Heart left ventricle (tissue), 16 donors: ENCODE measurements at regions of chr11 and their contacts with region 1.

Region 1: DNA sequence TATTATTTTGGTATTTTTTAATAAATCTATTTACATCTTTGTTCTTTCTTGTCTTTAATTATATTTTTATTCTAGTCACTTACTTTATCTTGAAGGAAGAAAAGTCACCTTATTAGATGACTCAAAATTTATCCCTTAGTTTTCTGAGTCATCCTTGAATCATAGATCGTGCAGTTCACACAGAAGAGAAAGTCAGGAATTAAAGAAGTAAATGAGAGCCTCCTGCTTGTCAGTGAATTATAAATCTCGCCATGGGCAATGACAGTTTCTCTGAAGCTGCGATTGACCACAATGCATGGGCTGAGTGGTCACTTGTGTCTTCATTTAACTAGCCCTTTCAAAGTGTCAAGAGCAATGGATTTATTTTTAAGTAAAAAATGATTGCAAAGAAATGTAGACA is 91.2 kb downstream of the LUZP2 start:
- DNase-seq: no peak
- ATAC-seq: no peak
- H3K4me3 ChIP-seq: no peak overlapping the region
- H3K27ac ChIP-seq: no peak overlapping the region
- H3K4me1 ChIP-seq: no peaks in the 10 kb centered on the region
- H3K27me3 ChIP-seq: no peaks in the 10 kb centered on the region
- CTCF ChIP-seq: no peak
- POLR2A ChIP-seq: no peak

Region 2: DNA sequence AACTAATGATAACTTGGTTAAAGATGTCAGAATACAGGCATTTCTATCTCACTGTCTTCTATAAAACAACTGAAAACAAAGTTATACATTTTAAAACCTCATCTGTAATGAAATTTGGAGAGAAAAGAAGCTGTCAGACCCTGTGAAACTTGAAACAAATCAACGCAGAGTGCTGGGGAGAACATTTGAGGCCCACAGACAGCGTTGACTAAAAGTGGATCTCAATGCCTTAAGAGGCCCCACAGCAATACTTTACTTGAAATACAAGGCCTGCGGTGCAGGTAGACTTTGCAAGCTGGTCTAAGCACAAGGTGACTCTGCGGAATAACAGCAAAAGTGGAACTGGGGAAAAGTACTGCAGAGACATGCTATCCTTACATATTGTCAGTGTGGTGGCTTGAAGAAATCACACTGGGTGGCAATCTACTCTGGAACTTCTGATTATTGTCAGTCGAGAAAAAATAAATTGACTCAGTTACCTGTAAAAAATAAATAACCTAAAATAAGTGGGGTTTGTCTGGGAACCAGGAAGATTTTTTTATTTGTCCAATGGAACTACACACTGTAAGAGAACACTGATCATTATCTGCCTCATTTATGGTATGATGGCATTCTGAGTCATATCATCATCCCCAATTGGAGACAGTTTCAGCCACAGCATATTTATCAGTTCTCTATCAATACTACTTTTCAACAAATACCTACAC is 47.7 kb after region 1 on chr11:
- intact Hi-C with region 1: loop called in 1 of 10 experiments (anchors 5 kb)
- DNase-seq: no peak
- ATAC-seq: no peak
- H3K4me3 ChIP-seq: no peak overlapping the region
- H3K27ac ChIP-seq: no peak overlapping the region
- H3K4me1 ChIP-seq: no peaks in the 10 kb centered on the region
- H3K27me3 ChIP-seq: no peaks in the 10 kb centered on the region
- CTCF ChIP-seq: no peak
- POLR2A ChIP-seq: no peak